RWPE1 (cell line): ENCODE measurements at regions of chr1 and their contacts with region 1.

Region 1: GRCh38 chr1:23184212-23184934 is 15.7 kb upstream of the LUZP1 start:
- DNase-seq: no peak
- H3K27ac ChIP-seq: no peak overlapping the region
- CTCF ChIP-seq: peak; percentile 69

Region 2: GRCh38 chr1:23098463-23099170 is 85.8 kb before region 1 on chr1:
- CTCF ChIA-PET with region 1: interaction called, 67 read pairs
- POLR2A ChIA-PET with region 1: no interaction called
- DNase-seq: peak; percentile 60
- H3K27ac ChIP-seq: no peak overlapping the region
- CTCF ChIP-seq: peak; percentile 94

Region 3: DNA sequence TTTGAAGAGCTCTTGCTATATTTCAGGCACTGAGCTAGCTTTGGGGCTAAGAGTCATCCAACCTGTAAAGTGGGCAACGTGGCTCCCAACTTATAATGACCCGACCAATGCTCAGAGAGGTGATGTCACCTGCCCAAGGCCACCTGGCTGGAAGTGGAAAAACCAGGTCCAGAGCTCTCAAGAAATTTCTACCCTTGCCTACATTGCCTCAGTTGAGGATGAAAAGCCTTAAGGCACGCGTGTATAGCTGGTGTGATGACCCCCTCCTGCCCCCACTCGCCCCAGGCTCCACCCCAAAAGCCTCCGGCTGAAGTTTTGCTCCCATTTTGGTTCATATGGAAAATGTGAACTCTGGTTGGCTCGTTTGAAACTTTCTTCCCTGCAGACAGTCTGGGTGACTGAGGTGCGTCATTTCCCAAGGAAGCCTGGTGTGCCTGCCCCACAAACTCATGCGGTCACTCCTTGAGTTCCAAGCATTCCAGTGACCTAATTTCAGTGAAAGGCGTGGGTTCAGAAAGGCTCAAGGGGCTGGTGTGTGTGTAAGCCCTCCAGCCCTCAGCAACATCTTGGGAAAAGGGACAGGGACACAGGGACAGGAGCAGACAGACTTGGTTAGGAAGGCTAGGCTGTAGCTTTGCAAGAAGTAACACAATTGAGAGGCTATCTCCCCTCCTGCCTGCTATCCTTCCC is 12.4 kb after region 1 on chr1:
- CTCF ChIA-PET with region 1: interaction called, 11 read pairs
- POLR2A ChIA-PET with region 1: no interaction called
- DNase-seq: peak; percentile 94
- H3K27ac ChIP-seq: peak overlapping the region; percentile 90
- CTCF ChIP-seq: no peak